ENCODE measurements at regions of chr7 and their contacts with region 1.

Region 1: DNA sequence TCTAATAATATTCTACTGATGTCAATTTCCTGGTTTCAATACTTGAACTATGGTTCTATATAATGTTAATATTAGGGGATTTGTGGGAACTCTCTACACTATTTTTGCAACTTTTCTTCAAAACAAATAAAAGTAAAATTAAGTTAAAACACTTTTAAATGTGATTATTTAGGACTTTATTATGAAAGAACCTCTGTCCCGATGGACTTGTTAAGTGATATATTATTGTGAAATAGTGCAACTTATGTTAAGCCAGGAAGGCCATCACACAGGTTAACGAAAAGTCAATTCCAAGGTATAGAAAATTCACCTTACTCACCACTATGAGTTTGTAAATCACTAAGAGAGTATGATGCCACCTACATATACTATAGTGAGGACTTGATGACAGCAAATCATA is 79.2 kb downstream of the IMMP2L start:
- DNase-seq: no peak
- ATAC-seq: no peak
- H3K4me3 ChIP-seq: no peak overlapping the region
- H3K27ac ChIP-seq: no peak overlapping the region
- H3K4me1 ChIP-seq: no peaks in the 10 kb centered on the region
- H3K27me3 ChIP-seq: no peaks in the 10 kb centered on the region
- CTCF ChIP-seq: no peak
- POLR2A ChIP-seq: no peak

Region 2: GRCh38 chr7:111150709-111151108 is 332.4 kb before region 1 on chr7:
- intact Hi-C with region 1: loop called in 1 of 2 experiments (anchors 5 kb)
- DNase-seq: no peak
- ATAC-seq: peak in 1 of 4 donors; percentile 39
- H3K4me3 ChIP-seq: no peak overlapping the region
- H3K27ac ChIP-seq: no peak overlapping the region
- H3K4me1 ChIP-seq: no peaks in the 10 kb centered on the region
- H3K27me3 ChIP-seq: no peaks in the 10 kb centered on the region
- CTCF ChIP-seq: no peak
- POLR2A ChIP-seq: no peak

Measured in right lobe of liver (tissue), 6 donors.